A549 (cell line): ENCODE measurements at regions of chr2 and their contacts with region 1.

Region 1: GRCh38 chr2:169109502-169110409 is 40.4 kb downstream of the DHRS9 start:
- DNase-seq: peak; percentile 68 to 74
- ATAC-seq: peak; percentile 88 to 98; a peak in 5 of 6 replicates
- H3K4me3 ChIP-seq: no peak overlapping the region
- H3K27ac ChIP-seq: no peak overlapping the region
- H3K4me1 ChIP-seq: no peaks in the 10 kb centered on the region
- CTCF ChIP-seq: peak; percentile 87
- EP300 ChIP-seq: no peak
- POLR2A ChIP-seq: no peak
- RAD21 ChIP-seq: peak; percentile 91 to 92

Region 2: DNA sequence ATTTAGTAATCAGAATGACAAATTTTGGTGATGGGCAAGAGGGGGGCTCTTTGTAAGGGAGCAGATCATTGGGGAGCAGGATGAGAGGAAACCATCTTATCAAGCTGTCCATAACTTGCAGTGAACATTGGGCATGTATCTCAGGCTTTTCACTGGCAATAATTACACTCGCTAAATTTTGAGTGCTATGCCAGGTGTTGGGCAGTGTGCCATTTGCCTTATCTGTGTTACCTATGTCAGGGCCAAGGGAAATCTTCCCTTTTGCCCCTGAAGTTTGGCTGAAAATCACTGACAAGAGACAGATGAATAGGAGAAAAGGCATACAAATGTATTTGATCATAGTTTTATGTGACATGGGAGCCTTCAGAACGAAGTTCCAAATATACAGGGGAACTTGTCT is 268.3 kb before region 1 on chr2:
- CTCF ChIA-PET with region 1: no interaction called
- POLR2A ChIA-PET with region 1: no interaction called
- DNase-seq: no peak
- ATAC-seq: no peak
- H3K4me3 ChIP-seq: no peak overlapping the region
- H3K27ac ChIP-seq: no peak overlapping the region
- H3K4me1 ChIP-seq: no peaks in the 10 kb centered on the region
- CTCF ChIP-seq: no peak
- EP300 ChIP-seq: no peak
- POLR2A ChIP-seq: no peak
- RAD21 ChIP-seq: no peak

Region 3: GRCh38 chr2:168961450-168962229 is 148.1 kb before region 1 on chr2:
- CTCF ChIA-PET with region 1: interaction called, 25 read pairs
- POLR2A ChIA-PET with region 1: no interaction called
- DNase-seq: peak; percentile 27 to 80
- ATAC-seq: peak; percentile 89 to 95
- H3K4me3 ChIP-seq: no peak overlapping the region
- H3K27ac ChIP-seq: no peak overlapping the region
- H3K4me1 ChIP-seq: no peaks in the 10 kb centered on the region
- CTCF ChIP-seq: peak; percentile 90
- EP300 ChIP-seq: no peak
- POLR2A ChIP-seq: no peak
- RAD21 ChIP-seq: peak; percentile 89 to 90

Region 4: GRCh38 chr2:169034256-169034655 is 75.5 kb before region 1 on chr2:
- CTCF ChIA-PET with region 1: interaction called, 12 read pairs
- POLR2A ChIA-PET with region 1: no interaction called
- DNase-seq: peak in 1 of 2 experiments; percentile 42
- ATAC-seq: 0 out of 6 replicates have a peak, but pooled peaks of 1 of the 2 experiments have one; percentile 39
- H3K4me3 ChIP-seq: no peak overlapping the region
- H3K27ac ChIP-seq: no peak overlapping the region
- H3K4me1 ChIP-seq: peaks cover 11% of the 10 kb centered on the region; the same call in 2 of the 3 replicates
- CTCF ChIP-seq: no peak
- EP300 ChIP-seq: no peak
- POLR2A ChIP-seq: no peak
- RAD21 ChIP-seq: no peak

Region 5: GRCh38 chr2:169131587-169132512 is 22.1 kb after region 1 on chr2:
- CTCF ChIA-PET with region 1: interaction called, 26 read pairs
- POLR2A ChIA-PET with region 1: no interaction called
- DNase-seq: peak; percentile 28 to 55
- ATAC-seq: peak; percentile 43 to 86; a peak in 3 of 6 replicates
- H3K4me3 ChIP-seq: no peak overlapping the region
- H3K27ac ChIP-seq: no peak overlapping the region
- H3K4me1 ChIP-seq: no peaks in the 10 kb centered on the region
- CTCF ChIP-seq: peak; percentile 83
- EP300 ChIP-seq: no peak
- POLR2A ChIP-seq: no peak
- RAD21 ChIP-seq: peak; percentile 46 to 53; a peak in 4 of 5 replicates

Region 6: GRCh38 chr2:169221745-169222369 is 112.1 kb after region 1 on chr2:
- CTCF ChIA-PET with region 1: interaction called, 15 read pairs
- POLR2A ChIA-PET with region 1: no interaction called
- DNase-seq: peak; percentile 5 to 21
- ATAC-seq: peak; percentile 76 to 79; a peak in 5 of 6 replicates
- H3K4me3 ChIP-seq: no peak overlapping the region
- H3K27ac ChIP-seq: no peak overlapping the region
- H3K4me1 ChIP-seq: no peaks in the 10 kb centered on the region
- CTCF ChIP-seq: peak; percentile 61
- EP300 ChIP-seq: no peak
- POLR2A ChIP-seq: no peak
- RAD21 ChIP-seq: peak; percentile 42 to 55

Region 7: GRCh38 chr2:169386722-169387121 is 277.0 kb after region 1 on chr2:
- CTCF ChIA-PET with region 1: no interaction called
- POLR2A ChIA-PET with region 1: no interaction called
- DNase-seq: no peak
- ATAC-seq: no peak
- H3K4me3 ChIP-seq: no peak overlapping the region
- H3K27ac ChIP-seq: no peak overlapping the region
- H3K4me1 ChIP-seq: no peaks in the 10 kb centered on the region
- CTCF ChIP-seq: no peak
- EP300 ChIP-seq: no peak
- POLR2A ChIP-seq: no peak
- RAD21 ChIP-seq: no peak

Region 8: GRCh38 chr2:169513926-169514325 is 404.2 kb after region 1 on chr2:
- CTCF ChIA-PET with region 1: no interaction called
- POLR2A ChIA-PET with region 1: no interaction called
- DNase-seq: no peak
- ATAC-seq: no peak
- H3K4me3 ChIP-seq: no peak overlapping the region
- H3K27ac ChIP-seq: no peak overlapping the region
- H3K4me1 ChIP-seq: peaks cover 18% of the 10 kb centered on the region
- CTCF ChIP-seq: no peak
- EP300 ChIP-seq: no peak
- POLR2A ChIP-seq: no peak
- RAD21 ChIP-seq: no peak